CD8-positive, alpha-beta T cell (primary cell): ENCODE measurements at regions of chrX and their contacts with region 1.

Region 1: DNA sequence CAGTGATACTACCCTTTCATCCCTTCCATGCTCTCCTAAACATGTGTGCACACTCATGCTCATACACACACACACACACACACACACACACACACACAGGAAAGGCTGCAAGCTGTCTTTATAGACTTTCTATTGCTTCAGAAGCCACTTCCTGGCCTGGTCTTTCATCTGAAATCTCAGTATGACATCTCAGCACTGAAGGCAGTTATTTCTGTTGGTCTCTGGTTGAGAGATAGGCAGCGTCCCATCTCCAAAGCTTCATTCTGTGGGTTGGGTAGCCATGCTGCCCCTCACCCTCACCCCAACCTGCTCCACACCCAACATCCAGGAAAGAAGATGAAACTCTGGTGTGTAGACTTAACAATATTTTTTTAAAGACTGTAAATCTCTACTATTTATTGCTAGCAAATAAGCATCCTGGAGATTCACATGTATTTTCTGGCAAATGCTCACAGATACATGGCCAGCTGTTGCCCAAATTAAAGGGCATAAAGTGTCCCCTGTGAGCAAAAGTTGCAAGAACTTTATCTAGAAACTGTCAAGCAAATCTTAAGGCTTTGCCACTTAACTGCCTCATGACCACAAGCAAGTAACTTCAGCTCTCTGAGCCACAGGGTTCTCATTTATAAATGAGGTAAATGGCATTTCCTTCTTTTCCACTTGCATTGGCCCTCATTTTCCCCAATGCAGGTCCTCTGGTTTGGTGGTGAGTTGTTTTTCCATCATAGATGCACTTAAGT is 189.8 kb upstream of the AFF2 start:
- DNase-seq: peak; percentile 3 to 74 (median 57)
- ATAC-seq: peak; percentile 89
- H3K4me3 ChIP-seq: no peak overlapping the region
- H3K4me3 Mint-ChIP-seq: peak overlapping the region; percentile 62
- H3K27ac ChIP-seq: peak overlapping the region in 1 of 2 experiments; percentile 53
- H3K27ac Mint-ChIP-seq: peak overlapping the region; percentile 85
- H3K4me1 ChIP-seq: peaks cover 27% of the 10 kb centered on the region
- H3K4me1 Mint-ChIP-seq: peaks cover 39% of the 10 kb centered on the region
- H3K27me3 ChIP-seq: no peaks in the 10 kb centered on the region
- H3K27me3 Mint-ChIP-seq: no peaks in the 10 kb centered on the region
- CTCF ChIP-seq: no peak

Region 2: GRCh38 chrX:148333989-148334388 is 23.4 kb after region 1 on chrX:
- CTCF ChIA-PET with region 1: no interaction called
- POLR2A ChIA-PET with region 1: interaction called, 4 read pairs
- intact Hi-C with region 1: loop called in 1 of 2 experiments (anchors 2 kb)
- DNase-seq: peak in 2 of 9 experiments; percentile 3 to 42
- ATAC-seq: peak; percentile 75
- H3K4me3 ChIP-seq: no peak overlapping the region
- H3K4me3 Mint-ChIP-seq: peak overlapping the region; percentile 65
- H3K27ac ChIP-seq: peak overlapping the region in 1 of 2 experiments; percentile 49
- H3K27ac Mint-ChIP-seq: peak overlapping the region; percentile 93
- H3K4me1 ChIP-seq: peaks cover 47% of the 10 kb centered on the region
- H3K4me1 Mint-ChIP-seq: peaks cover 63% of the 10 kb centered on the region
- H3K27me3 ChIP-seq: no peaks in the 10 kb centered on the region
- H3K27me3 Mint-ChIP-seq: no peaks in the 10 kb centered on the region
- CTCF ChIP-seq: no peak

Region 3: DNA sequence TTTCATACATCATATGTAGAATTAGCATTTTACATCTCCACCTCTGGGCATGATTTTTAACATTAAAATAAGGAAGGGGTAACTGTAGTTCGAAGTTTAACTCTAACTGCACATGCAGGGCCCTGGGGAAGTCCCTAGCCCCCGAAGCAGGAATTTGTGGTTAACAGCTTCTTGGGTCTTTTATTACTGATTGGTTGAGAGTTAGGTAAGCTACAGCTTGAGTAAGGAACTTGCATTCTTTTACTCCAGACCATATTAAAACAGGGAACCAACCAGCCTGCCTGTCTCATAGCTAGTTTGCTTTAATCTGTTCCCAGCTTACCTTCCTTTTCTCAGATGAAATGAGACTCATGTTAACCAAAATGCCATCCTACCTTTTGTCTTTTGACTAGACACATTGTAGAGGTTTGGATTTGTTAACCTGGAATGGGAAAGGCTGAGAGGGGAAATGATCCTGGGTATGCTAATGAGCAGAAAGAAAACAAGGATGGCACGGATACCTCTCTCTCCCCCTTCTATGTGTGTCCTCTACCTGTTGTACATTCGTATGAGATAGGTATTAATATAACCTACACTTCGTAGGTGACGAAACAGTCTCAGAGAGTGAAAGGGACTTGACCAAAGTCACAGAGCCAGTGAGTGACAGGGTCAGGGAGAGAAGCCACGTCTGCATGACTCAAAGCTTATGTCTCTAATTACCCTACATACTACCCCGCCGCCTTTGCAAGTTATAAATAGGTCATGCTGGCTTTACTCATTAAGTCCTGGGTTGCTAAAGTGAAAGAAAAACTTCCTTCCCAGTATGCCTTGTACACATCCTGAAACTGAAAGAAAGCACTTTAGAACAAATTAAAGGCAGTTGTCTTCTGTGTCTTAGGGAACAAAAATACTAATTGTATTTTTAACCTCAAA is 70.3 kb after region 1 on chrX:
- CTCF ChIA-PET with region 1: no interaction called
- POLR2A ChIA-PET with region 1: no interaction called
- intact Hi-C with region 1: loop called in 1 of 2 experiments (anchors 10 kb)
- DNase-seq: peak in 7 of 9 experiments; percentile 1 to 81 (median 23)
- ATAC-seq: peak; percentile 76
- H3K4me3 ChIP-seq: peak overlapping the region; percentile 36 to 45
- H3K4me3 Mint-ChIP-seq: peak overlapping the region; percentile 80
- H3K27ac ChIP-seq: peak overlapping the region; percentile 32 to 92
- H3K27ac Mint-ChIP-seq: peak overlapping the region; percentile 95
- H3K4me1 ChIP-seq: peaks cover 16% of the 10 kb centered on the region
- H3K4me1 Mint-ChIP-seq: peaks cover 32% of the 10 kb centered on the region
- H3K27me3 ChIP-seq: no peaks in the 10 kb centered on the region
- H3K27me3 Mint-ChIP-seq: no peaks in the 10 kb centered on the region
- CTCF ChIP-seq: no peak

Region 4: GRCh38 chrX:148588649-148589310 is 278.2 kb after region 1 on chrX:
- CTCF ChIA-PET with region 1: no interaction called
- POLR2A ChIA-PET with region 1: no interaction called
- intact Hi-C with region 1: no loop called
- DNase-seq: no peak
- ATAC-seq: no peak
- H3K4me3 ChIP-seq: no peak overlapping the region
- H3K4me3 Mint-ChIP-seq: no peak overlapping the region
- H3K27ac ChIP-seq: no peak overlapping the region
- H3K27ac Mint-ChIP-seq: no peak overlapping the region
- H3K4me1 ChIP-seq: no peaks in the 10 kb centered on the region
- H3K4me1 Mint-ChIP-seq: no peaks in the 10 kb centered on the region
- H3K27me3 ChIP-seq: no peaks in the 10 kb centered on the region
- H3K27me3 Mint-ChIP-seq: no peaks in the 10 kb centered on the region
- CTCF ChIP-seq: no peak